Endothelial cell of umbilical vein (primary cell): ENCODE measurements at regions of chr3 and their contacts with region 1.

Region 1: GRCh38 chr3:169390271-169391230 is 273.0 kb downstream of the MECOM start:
- DNase-seq: peak; percentile 80
- H3K4me3 ChIP-seq: no peak overlapping the region
- H3K27ac ChIP-seq: peak overlapping the region; percentile 88
- H3K4me1 ChIP-seq: peaks cover 45% of the 10 kb centered on the region
- H3K27me3 ChIP-seq: no peaks in the 10 kb centered on the region
- CTCF ChIP-seq: peak; percentile 15 to 25
- POLR2A ChIP-seq: no peak

Region 2: GRCh38 chr3:169133178-169134161 is 257.1 kb before region 1 on chr3:
- CTCF ChIA-PET with region 1: interaction called, 11 read pairs
- POLR2A ChIA-PET with region 1: no interaction called
- dilution Hi-C with region 1: no loop called
- intact Hi-C with region 1: no loop called
- DNase-seq: peak; percentile 83
- H3K4me3 ChIP-seq: no peak overlapping the region
- H3K27ac ChIP-seq: peak overlapping the region; percentile 52
- H3K4me1 ChIP-seq: peaks cover 44% of the 10 kb centered on the region
- H3K27me3 ChIP-seq: no peaks in the 10 kb centered on the region
- CTCF ChIP-seq: peak in 1 of 2 donors; percentile 16
- POLR2A ChIP-seq: peak; percentile 17

Region 3: GRCh38 chr3:169241991-169242707 is 148.4 kb before region 1 on chr3:
- CTCF ChIA-PET with region 1: interaction called, 6 read pairs
- POLR2A ChIA-PET with region 1: no interaction called
- dilution Hi-C with region 1: no loop called
- intact Hi-C with region 1: loop called (anchors 1 kb)
- DNase-seq: peak; percentile 87
- H3K4me3 ChIP-seq: peak overlapping the region; percentile 40 to 79 (median 42)
- H3K27ac ChIP-seq: peak overlapping the region; percentile 97
- H3K4me1 ChIP-seq: peaks cover 64% of the 10 kb centered on the region
- H3K27me3 ChIP-seq: no peaks in the 10 kb centered on the region
- CTCF ChIP-seq: no peak
- POLR2A ChIP-seq: peak; percentile 42

Region 4: GRCh38 chr3:169354774-169355501 is 35.6 kb before region 1 on chr3:
- CTCF ChIA-PET with region 1: interaction called, 8 read pairs
- POLR2A ChIA-PET with region 1: no interaction called
- dilution Hi-C with region 1: no loop called
- intact Hi-C with region 1: loop called (anchors 1 kb)
- DNase-seq: peak; percentile 70
- H3K4me3 ChIP-seq: peak overlapping the region in 1 of 3 experiments; percentile 20
- H3K27ac ChIP-seq: peak overlapping the region; percentile 12
- H3K4me1 ChIP-seq: peaks cover 19% of the 10 kb centered on the region
- H3K27me3 ChIP-seq: no peaks in the 10 kb centered on the region
- CTCF ChIP-seq: no peak
- POLR2A ChIP-seq: no peak

Region 5: GRCh38 chr3:169440926-169441325 is 50.4 kb after region 1 on chr3:
- CTCF ChIA-PET with region 1: no interaction called
- POLR2A ChIA-PET with region 1: no interaction called
- dilution Hi-C with region 1: no loop called
- intact Hi-C with region 1: no loop called
- DNase-seq: no peak
- H3K4me3 ChIP-seq: no peak overlapping the region
- H3K27ac ChIP-seq: no peak overlapping the region
- H3K4me1 ChIP-seq: no peaks in the 10 kb centered on the region
- H3K27me3 ChIP-seq: no peaks in the 10 kb centered on the region
- CTCF ChIP-seq: no peak
- POLR2A ChIP-seq: no peak

Region 6: DNA sequence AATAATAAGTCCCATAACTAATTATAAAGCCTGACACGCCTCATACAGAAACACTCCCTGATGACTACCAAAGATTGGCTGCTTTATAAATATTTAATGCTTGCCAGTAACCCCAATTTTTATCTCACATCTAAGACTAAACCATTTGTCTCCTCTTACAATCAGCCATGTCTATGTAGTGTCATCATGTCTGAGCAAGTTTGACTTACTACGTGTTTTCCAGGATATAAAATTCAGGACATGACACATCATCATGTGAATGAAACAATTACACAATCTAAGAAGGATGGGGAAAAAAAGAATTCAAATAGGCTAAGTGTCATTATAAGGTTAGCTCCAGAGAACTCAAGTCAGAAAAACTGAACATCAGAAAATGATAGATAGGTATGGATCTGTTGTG is 64.3 kb after region 1 on chr3:
- CTCF ChIA-PET with region 1: interaction called, 3 read pairs
- POLR2A ChIA-PET with region 1: no interaction called
- dilution Hi-C with region 1: no loop called
- intact Hi-C with region 1: loop called (anchors 1 kb)
- DNase-seq: peak; percentile 93
- H3K4me3 ChIP-seq: no peak overlapping the region
- H3K27ac ChIP-seq: peak overlapping the region; percentile 69
- H3K4me1 ChIP-seq: peaks cover 28% of the 10 kb centered on the region
- H3K27me3 ChIP-seq: no peaks in the 10 kb centered on the region
- CTCF ChIP-seq: no peak
- POLR2A ChIP-seq: no peak

Region 7: GRCh38 chr3:169575373-169575772 is 184.8 kb after region 1 on chr3:
- CTCF ChIA-PET with region 1: interaction called, 3 read pairs
- POLR2A ChIA-PET with region 1: no interaction called
- dilution Hi-C with region 1: no loop called
- intact Hi-C with region 1: loop called (anchors 2 kb)
- DNase-seq: peak; percentile 85
- H3K4me3 ChIP-seq: peak overlapping the region in 1 of 3 experiments; percentile 28
- H3K27ac ChIP-seq: peak overlapping the region; percentile 15
- H3K4me1 ChIP-seq: peaks cover 25% of the 10 kb centered on the region
- H3K27me3 ChIP-seq: no peaks in the 10 kb centered on the region
- CTCF ChIP-seq: no peak
- POLR2A ChIP-seq: peak; percentile 16

Region 8: DNA sequence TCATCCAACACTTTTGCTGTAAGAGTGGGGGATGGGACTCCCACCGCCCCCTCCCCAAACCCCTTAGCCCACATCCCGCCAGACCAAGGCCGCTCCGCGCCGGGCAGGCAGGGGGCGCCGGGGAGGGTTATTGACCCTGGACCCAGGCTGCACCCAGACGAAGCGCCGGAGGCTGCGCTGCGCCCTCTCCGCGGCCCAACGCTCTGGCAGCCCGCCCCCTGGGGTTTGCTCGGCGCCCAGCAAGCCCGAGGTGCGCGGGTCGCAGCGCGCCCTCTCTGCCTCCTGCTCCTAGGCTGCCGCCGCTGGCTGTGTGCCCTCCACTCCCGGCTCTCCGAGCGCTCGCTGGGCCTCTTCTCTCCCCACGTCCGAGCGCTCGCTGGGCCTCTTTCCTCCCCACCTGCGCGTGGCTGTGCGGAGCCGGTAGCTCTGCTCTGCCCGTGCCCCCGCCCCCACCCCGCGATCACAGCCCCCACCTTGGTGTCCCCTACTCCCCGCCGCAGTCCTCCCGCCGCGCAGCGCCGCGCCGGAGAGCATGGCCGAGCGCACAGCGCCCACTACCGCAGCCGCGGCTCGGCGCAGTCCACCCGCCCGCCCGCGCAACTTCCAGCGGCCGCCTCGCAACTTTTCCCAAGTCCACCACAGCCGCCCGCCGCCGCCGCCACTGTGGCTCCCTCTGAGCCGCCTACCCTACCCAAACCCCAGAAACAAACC is 271.7 kb after region 1 on chr3:
- CTCF ChIA-PET with region 1: interaction called, 94 read pairs
- POLR2A ChIA-PET with region 1: no interaction called
- dilution Hi-C with region 1: no loop called
- intact Hi-C with region 1: loop called (anchors 1 kb)
- DNase-seq: peak; percentile 84
- H3K4me3 ChIP-seq: peak overlapping the region; percentile 23 to 77 (median 64)
- H3K27ac ChIP-seq: peak overlapping the region; percentile 81
- H3K4me1 ChIP-seq: peaks cover 66% of the 10 kb centered on the region
- H3K27me3 ChIP-seq: no peaks in the 10 kb centered on the region
- CTCF ChIP-seq: peak; percentile 46 to 77
- POLR2A ChIP-seq: peak; percentile 55